ENCODE measurements at regions of chr6 and their contacts with region 1.

Region 1: DNA sequence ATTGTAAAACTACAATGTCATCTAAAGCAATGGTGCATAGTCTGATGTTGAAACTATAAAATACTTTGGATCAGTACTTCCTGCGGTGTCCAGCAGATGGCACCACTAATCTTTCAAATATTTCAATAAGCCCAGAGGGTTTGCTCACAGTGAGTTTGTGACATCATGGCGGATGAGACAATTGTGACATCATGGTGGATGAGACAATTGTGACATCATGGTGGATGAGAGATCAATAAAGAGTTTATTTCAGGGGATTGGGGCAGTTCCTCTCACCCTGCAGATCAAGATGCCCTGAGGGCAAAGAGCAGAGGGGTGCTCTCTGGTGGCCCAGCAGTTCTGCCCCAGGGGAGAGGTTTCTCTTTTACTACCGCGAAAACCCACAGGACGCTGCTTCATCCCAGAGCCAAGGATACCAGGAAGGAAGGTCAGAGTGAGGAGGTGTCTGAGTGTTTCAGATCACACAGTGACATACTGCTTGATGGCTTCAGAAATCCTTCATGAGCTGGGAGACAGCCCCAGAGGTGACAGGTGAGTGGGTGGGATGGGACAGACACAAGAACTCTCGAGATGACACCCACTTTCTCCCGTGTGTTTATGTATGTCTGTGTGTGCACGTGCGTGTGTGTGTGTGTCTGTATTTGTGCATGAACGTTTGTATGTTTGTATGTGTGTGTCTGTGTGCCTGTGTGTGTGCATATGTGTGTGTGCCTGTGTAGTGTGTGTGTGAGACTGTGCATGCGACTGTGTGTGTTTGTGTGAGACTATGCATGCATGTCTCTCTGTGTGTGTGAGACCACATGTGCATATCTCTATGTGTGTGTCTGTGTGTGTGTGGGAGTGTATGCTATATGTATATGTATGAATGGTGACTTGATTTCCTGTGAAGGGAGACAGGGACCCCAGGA is 7.3 kb upstream of the ULBP2 start:
- DNase-seq: no peak
- ATAC-seq: peak; percentile 33
- H3K4me3 Mint-ChIP-seq: no peak overlapping the region
- H3K27ac Mint-ChIP-seq: no peak overlapping the region
- H3K4me1 Mint-ChIP-seq: peaks cover 21% of the 10 kb centered on the region
- H3K27me3 Mint-ChIP-seq: peaks cover 72% of the 10 kb centered on the region
- CTCF ChIP-seq: no peak

Region 2: GRCh38 chr6:149468179-149468578 is 466.3 kb before region 1 on chr6:
- CTCF ChIA-PET with region 1: no interaction called
- POLR2A ChIA-PET with region 1: no interaction called
- intact Hi-C with region 1: loop called (anchors 5 kb)
- DNase-seq: peak; percentile 37
- ATAC-seq: peak; percentile 48
- H3K4me3 Mint-ChIP-seq: peak overlapping the region; percentile 83
- H3K27ac Mint-ChIP-seq: peak overlapping the region; percentile 95
- H3K4me1 Mint-ChIP-seq: peaks cover 95% of the 10 kb centered on the region
- H3K27me3 Mint-ChIP-seq: no peaks in the 10 kb centered on the region
- CTCF ChIP-seq: no peak

Region 3: GRCh38 chr6:149963462-149964307 is 29.2 kb after region 1 on chr6 and contains the start of gene ULBP1:
- CTCF ChIA-PET with region 1: no interaction called
- POLR2A ChIA-PET with region 1: interaction called, 3 read pairs
- intact Hi-C with region 1: loop called (anchors 1 kb)
- DNase-seq: peak; percentile 76
- ATAC-seq: peak; percentile 74
- H3K4me3 Mint-ChIP-seq: peak within 1 kb of the TSS; percentile 91
- H3K27ac Mint-ChIP-seq: peak within 1 kb of the TSS; percentile 81
- H3K4me1 Mint-ChIP-seq: peaks cover 27% of the 10 kb centered on the region
- H3K27me3 Mint-ChIP-seq: peaks cover 72% of the 10 kb centered on the region
- CTCF ChIP-seq: no peak
- total RNA-seq, gene ULBP1: 1.9 and 2.2 TPM in 2 replicates

Region 4: GRCh38 chr6:150068720-150069648 is 134.5 kb after region 1 on chr6 and contains the start of gene ULBP3:
- CTCF ChIA-PET with region 1: no interaction called
- POLR2A ChIA-PET with region 1: no interaction called
- intact Hi-C with region 1: loop called (anchors 1 kb)
- DNase-seq: peak; percentile 64
- ATAC-seq: peak; percentile 92
- H3K4me3 Mint-ChIP-seq: peak within 1 kb of the TSS; percentile 84
- H3K27ac Mint-ChIP-seq: peak within 1 kb of the TSS; percentile 7
- H3K4me1 Mint-ChIP-seq: peaks cover 22% of the 10 kb centered on the region
- H3K27me3 Mint-ChIP-seq: peaks cover 18% of the 10 kb centered on the region
- CTCF ChIP-seq: no peak
- total RNA-seq, gene ULBP3: 0.46 and 0.80 TPM in 2 replicates

Region 5: GRCh38 chr6:150310539-150310938 is 376.0 kb after region 1 on chr6:
- CTCF ChIA-PET with region 1: no interaction called
- POLR2A ChIA-PET with region 1: no interaction called
- intact Hi-C with region 1: no loop called
- DNase-seq: no peak
- ATAC-seq: no peak
- H3K4me3 Mint-ChIP-seq: no peak overlapping the region
- H3K27ac Mint-ChIP-seq: no peak overlapping the region
- H3K4me1 Mint-ChIP-seq: no peaks in the 10 kb centered on the region
- H3K27me3 Mint-ChIP-seq: peaks cover 18% of the 10 kb centered on the region
- CTCF ChIP-seq: no peak

Region 6: DNA sequence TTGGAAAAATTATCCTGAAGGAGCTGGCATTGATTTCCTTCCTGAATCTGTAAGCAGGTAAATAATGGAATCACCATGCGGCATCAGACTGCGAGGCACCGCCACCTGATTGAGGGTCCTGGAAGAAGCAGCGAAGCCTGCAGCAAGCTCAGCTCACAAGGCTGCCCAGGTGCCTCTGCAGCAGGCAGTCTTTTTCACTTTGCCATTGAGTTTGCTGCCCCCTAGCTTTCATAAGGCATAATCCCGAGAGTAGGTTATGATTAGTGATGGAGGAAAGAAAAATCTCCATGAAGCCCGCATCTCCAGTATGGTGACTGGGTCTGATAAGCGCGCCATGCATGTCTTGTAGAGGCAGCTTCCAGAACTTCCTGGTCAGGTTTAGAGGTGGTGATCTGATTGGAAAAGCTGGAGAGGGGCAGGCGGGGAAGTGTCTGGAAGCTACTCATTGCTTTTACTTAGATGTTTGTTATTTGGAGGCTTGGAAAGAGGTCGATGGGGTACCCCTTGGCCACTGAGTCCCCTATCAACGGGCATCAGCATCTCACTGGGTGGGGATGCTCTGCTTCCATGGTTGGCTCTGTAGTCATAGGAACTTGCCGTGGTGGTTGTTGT is 461.0 kb after region 1 on chr6:
- CTCF ChIA-PET with region 1: no interaction called
- POLR2A ChIA-PET with region 1: no interaction called
- intact Hi-C with region 1: loop called (anchors 1 kb)
- DNase-seq: no peak
- ATAC-seq: peak; percentile 79
- H3K4me3 Mint-ChIP-seq: no peak overlapping the region
- H3K27ac Mint-ChIP-seq: no peak overlapping the region
- H3K4me1 Mint-ChIP-seq: no peaks in the 10 kb centered on the region
- H3K27me3 Mint-ChIP-seq: peaks cover 17% of the 10 kb centered on the region
- CTCF ChIP-seq: no peak

Measured in activated B cell treated with CpG ODN at 0.5 μM for 24 hours (primary cell).